ENCODE measurements at regions of chr12 and their contacts with region 1.

Region 1: DNA sequence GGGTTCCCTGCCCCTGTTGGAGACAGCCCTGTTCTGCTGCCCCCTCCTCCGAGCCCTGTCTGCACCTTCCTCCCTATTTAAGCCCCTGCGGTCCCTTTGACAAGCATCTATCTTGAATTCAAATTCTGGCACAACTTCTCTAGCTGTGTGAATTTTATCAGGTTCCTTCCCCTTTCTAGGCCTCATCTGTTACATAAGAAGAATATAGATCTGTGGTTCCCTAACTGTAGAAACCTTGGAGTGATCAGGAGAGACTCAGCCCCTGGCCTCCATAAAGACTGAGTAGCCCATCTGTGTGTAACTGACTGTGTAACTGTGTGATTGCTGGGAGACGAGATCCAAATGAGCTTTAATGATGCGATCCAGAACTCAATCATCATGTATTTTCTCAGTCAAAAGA is 13.0 kb upstream of the RACGAP1 start:
- DNase-seq: no peak

Region 2: GRCh38 chr12:50050410-50051098 is 12.2 kb after region 1 on chr12:
- CTCF ChIA-PET with region 1: interaction called, 31 read pairs
- POLR2A ChIA-PET with region 1: interaction called, 6 read pairs
- DNase-seq: peak; percentile 30

Region 3: GRCh38 chr12:50055831-50056638 is 17.7 kb after region 1 on chr12:
- CTCF ChIA-PET with region 1: interaction called, 31 read pairs
- POLR2A ChIA-PET with region 1: interaction called, 6 read pairs
- DNase-seq: peak; percentile 65

Region 4: GRCh38 chr12:50074936-50075807 is 36.8 kb after region 1 on chr12:
- CTCF ChIA-PET with region 1: interaction called, 15 read pairs
- POLR2A ChIA-PET with region 1: no interaction called
- DNase-seq: peak; percentile 85